Activated CD4-positive, alpha-beta memory T cell treated with anti-CD3 and anti-CD28 coated beads, Interleukin-2, amount 10 ng/mL, durations not matched to agents 7 days and 5 days (primary cell): ENCODE measurements at regions of chr3 and their contacts with region 1.

Region 1: DNA sequence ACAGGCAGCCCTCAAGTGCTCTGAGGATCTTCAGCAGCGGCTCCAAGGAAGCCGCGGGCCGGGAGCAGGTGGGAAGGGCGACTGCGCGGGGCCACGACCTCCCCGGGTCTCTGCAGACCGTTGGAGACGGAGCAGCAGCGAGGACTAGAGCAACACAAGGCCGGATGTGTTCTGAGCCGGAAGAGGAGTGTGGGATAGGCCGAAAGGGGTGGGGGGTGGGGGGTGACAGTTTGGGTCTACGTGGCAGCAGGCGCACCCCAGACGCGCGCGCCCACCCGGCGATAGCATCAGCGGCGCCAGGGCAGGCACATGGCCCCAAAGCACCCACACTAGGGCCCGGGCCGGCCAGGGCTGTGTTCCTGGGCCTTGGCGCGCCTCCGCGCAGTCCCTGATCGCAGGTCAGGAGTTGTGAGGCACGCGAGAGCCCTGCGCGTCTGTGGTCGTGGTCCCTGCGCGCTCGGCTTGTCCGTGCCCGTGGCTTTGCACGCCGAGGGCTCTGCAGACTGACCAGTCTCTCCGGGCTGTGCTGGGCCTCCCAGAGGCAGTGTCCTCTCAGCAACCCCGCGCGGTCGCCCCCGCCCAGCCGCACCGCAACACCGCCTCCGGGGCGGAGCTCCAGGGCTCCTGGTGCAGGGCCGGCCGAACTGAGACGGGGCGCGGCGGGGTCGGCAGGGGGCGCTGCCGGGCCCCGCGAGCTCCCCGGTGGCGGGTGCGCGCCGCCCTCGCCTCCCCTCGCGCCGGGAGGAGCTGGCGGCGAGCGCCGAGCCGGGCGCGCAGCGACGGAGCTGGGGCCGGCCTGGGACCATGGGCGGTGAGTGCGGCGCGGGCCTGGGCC is at the start of gene PXYLP1:
- DNase-seq: peak; percentile 93
- H3K4me3 Mint-ChIP-seq: peak within 1 kb of the TSS; percentile 79
- H3K27ac Mint-ChIP-seq: peak within 1 kb of the TSS; percentile 86
- H3K4me1 Mint-ChIP-seq: peaks cover 53% of the 10 kb centered on the region
- H3K27me3 Mint-ChIP-seq: peaks cover 9% of the 10 kb centered on the region
- total RNA-seq, gene PXYLP1: 16.1 to 16.5 TPM

Region 2: GRCh38 chr3:141164852-141165251 is 66.5 kb before region 1 on chr3:
- CTCF ChIA-PET with region 1: no interaction called
- POLR2A ChIA-PET with region 1: no interaction called
- DNase-seq: no peak
- H3K4me3 Mint-ChIP-seq: no peak overlapping the region
- H3K27ac Mint-ChIP-seq: no peak overlapping the region
- H3K4me1 Mint-ChIP-seq: no peaks in the 10 kb centered on the region
- H3K27me3 Mint-ChIP-seq: peaks cover 24% of the 10 kb centered on the region

Region 3: GRCh38 chr3:141243271-141243707 is 12.0 kb after region 1 on chr3:
- CTCF ChIA-PET with region 1: interaction called, 23 read pairs
- POLR2A ChIA-PET with region 1: interaction called, 10 read pairs
- DNase-seq: peak; percentile 39
- H3K4me3 Mint-ChIP-seq: no peak overlapping the region
- H3K27ac Mint-ChIP-seq: peak overlapping the region; percentile 32
- H3K4me1 Mint-ChIP-seq: peaks cover 36% of the 10 kb centered on the region
- H3K27me3 Mint-ChIP-seq: no peaks in the 10 kb centered on the region

Region 4: DNA sequence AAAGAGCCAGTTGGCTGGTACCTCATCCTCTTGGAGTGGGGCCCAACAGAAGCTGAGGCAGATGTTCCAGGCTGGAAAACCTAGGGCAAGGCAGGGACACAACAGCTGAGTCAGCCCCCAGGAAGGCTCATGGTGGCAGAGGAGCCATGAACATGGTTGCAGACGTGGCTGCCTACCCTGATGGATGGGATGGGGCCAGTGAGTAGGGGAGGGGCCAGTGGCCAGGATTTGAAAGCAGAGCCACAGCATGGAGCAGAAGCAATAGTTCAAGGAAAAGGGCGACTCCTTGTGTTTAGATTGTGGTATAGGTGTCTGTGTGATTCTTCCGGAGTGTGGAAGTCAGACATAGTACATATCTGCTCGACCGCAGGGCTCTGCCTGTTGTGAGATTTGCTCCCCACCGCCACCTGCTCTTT is 24.5 kb after region 1 on chr3:
- CTCF ChIA-PET with region 1: interaction called, 52 read pairs
- POLR2A ChIA-PET with region 1: interaction called, 23 read pairs
- DNase-seq: peak; percentile 50
- H3K4me3 Mint-ChIP-seq: no peak overlapping the region
- H3K27ac Mint-ChIP-seq: no peak overlapping the region
- H3K4me1 Mint-ChIP-seq: peaks cover 21% of the 10 kb centered on the region
- H3K27me3 Mint-ChIP-seq: no peaks in the 10 kb centered on the region

Region 5: GRCh38 chr3:141279077-141279967 is 48.0 kb after region 1 on chr3:
- CTCF ChIA-PET with region 1: interaction called, 28 read pairs
- POLR2A ChIA-PET with region 1: interaction called, 19 read pairs
- DNase-seq: no peak
- H3K4me3 Mint-ChIP-seq: no peak overlapping the region
- H3K27ac Mint-ChIP-seq: no peak overlapping the region
- H3K4me1 Mint-ChIP-seq: peaks cover 24% of the 10 kb centered on the region
- H3K27me3 Mint-ChIP-seq: no peaks in the 10 kb centered on the region

Region 6: DNA sequence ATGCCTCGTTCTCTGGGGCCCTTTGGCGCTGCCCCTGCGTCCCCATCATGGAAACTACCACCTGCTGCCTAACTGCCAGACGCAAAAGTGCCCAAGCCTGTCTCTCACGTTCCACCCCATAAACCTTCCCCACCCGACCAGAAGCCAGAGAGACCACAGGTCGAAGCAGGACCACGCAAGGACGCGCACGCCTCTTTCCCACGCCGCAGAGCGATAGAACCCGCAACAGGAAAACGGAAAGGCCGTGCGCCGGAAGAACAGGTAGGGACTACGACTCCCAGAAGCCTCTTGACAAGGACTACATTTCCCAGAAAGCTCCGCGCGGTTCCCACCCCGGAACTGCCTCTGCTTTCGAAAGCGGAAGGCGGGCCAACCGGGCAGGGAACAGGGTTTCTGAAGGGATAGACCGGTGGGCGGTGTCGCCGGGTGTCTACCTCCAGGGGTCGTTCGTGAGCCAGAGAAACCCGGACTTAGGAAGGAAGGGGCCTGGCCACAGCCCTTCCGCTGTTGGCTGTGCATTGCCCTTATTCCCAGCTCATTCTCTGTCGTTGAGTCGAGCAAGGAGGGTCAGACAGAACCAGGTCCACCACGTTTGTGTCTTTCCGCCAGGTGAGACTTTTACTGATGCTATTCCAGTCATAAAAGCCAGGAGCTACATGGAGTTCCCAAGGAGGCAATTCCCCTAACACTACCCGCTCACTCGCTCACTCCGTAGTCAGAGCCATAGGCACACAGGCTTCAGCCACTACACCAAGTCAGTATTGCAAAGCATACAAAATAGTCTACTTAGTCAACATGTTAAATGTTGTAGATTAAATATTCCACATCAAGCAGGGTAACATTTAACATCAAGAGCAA is 80.4 kb after region 1 on chr3:
- CTCF ChIA-PET with region 1: interaction called, 20 read pairs
- POLR2A ChIA-PET with region 1: interaction called, 13 read pairs
- DNase-seq: peak; percentile 99
- H3K4me3 Mint-ChIP-seq: peak overlapping the region; percentile 93
- H3K27ac Mint-ChIP-seq: peak overlapping the region; percentile 86
- H3K4me1 Mint-ChIP-seq: peaks cover 58% of the 10 kb centered on the region
- H3K27me3 Mint-ChIP-seq: no peaks in the 10 kb centered on the region

Region 7: DNA sequence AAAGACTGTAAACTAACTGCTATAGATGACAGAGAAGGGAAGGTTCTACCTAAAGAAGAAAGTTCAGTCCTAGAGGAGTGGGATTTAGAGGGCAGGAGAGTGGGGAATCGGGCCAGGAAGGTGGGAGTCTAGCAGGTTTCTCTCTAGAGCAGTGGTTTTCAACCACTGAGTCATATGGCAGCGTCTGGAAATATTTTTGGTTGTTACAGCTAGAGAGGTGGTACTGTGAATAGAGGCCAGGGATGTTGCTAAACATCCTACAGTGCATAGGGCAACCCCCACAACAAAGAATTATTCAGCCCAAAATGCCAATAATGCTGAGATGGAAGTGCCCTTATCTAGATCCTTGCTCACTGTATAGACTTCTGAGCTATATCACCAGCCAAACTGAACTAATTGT is 673.8 kb after region 1 on chr3:
- CTCF ChIA-PET with region 1: no interaction called
- POLR2A ChIA-PET with region 1: no interaction called
- DNase-seq: no peak
- H3K4me3 Mint-ChIP-seq: no peak overlapping the region
- H3K27ac Mint-ChIP-seq: peak overlapping the region; percentile 21
- H3K4me1 Mint-ChIP-seq: peaks cover 24% of the 10 kb centered on the region
- H3K27me3 Mint-ChIP-seq: no peaks in the 10 kb centered on the region